Activated CD8-positive, alpha-beta T cell treated with anti-CD3 and anti-CD28 coated beads, Interleukin-2, amount 10 ng/mL, durations not matched to agents 7 days and 5 days (primary cell): ENCODE measurements at regions of chr14 and their contacts with region 1.

Region 1: DNA sequence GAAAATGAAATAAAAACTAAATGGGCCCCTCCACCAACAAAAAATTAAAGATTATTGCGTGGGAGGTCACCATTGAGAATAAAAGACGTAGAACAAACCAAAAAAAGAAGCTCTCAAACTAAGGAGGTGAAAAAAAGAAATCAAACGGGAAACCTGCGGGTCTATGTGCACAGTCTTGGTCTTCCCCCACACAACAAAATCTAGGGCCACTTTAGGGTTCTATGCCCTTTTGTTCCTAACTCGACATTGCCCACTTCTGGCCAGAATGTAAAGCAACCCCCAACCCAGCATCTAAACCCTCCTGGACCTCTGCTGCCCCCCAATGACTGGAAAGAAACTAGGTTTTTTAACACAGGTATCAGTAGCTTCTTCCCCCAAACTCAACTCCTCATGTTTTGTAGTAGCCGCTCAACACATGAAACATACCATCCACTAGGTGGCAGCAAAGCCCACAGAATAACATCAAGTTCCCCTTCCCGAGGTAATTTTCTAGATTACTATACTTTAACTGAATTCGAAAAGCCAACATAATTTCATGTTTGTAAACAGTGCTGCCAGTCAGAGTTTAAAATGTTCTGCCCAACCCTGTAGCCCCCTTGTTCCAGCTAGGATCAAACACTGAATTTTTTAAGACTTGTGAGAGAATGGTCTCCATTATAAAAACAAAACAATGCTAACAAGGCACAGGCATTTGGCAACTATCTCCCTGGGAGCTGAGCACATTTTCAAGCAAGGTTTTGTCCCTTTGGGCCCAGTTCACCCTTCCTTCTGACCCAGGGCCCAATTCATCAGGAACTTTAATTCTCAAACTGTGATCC is 18.7 kb downstream of the DAD1 start:
- DNase-seq: peak; percentile 94
- ATAC-seq: peak; percentile 87
- H3K4me3 Mint-ChIP-seq: peak overlapping the region; percentile 80
- H3K27ac Mint-ChIP-seq: peak overlapping the region; percentile 92
- H3K4me1 Mint-ChIP-seq: peaks cover 62% of the 10 kb centered on the region
- H3K27me3 Mint-ChIP-seq: no peaks in the 10 kb centered on the region

Region 2: GRCh38 chr14:21917699-21918436 is 652.5 kb before region 1 on chr14:
- CTCF ChIA-PET with region 1: interaction called, 70 read pairs
- POLR2A ChIA-PET with region 1: interaction called, 15 read pairs
- DNase-seq: peak; percentile 84
- ATAC-seq: peak; percentile 65
- H3K4me3 Mint-ChIP-seq: peak overlapping the region; percentile 78
- H3K27ac Mint-ChIP-seq: peak overlapping the region; percentile 81
- H3K4me1 Mint-ChIP-seq: peaks cover 73% of the 10 kb centered on the region
- H3K27me3 Mint-ChIP-seq: no peaks in the 10 kb centered on the region

Region 3: DNA sequence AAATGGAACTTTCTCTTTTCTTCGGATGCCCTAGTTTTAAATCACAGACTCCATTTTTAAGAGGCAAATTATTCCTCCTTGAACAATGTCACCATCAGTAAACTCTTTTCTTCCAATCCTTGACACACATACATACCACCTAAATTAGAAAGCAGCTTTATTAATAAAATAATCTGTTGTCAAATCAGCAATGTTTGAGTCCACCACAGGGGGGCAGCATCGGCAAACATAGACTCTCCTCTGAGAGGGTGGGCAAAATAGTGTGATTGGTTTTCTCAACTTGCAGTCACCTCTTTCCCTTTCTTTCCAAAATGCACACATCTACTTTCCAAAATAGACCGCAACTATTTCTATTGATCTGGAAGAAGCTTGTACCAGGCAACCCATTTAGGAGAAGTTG is 458.3 kb before region 1 on chr14:
- CTCF ChIA-PET with region 1: interaction called, 22 read pairs
- POLR2A ChIA-PET with region 1: interaction called, 3 read pairs
- DNase-seq: peak; percentile 61
- ATAC-seq: no peak
- H3K4me3 Mint-ChIP-seq: peak overlapping the region; percentile 68
- H3K27ac Mint-ChIP-seq: peak overlapping the region; percentile 81
- H3K4me1 Mint-ChIP-seq: peaks cover 33% of the 10 kb centered on the region
- H3K27me3 Mint-ChIP-seq: no peaks in the 10 kb centered on the region

Region 4: GRCh38 chr14:22505697-22506377 is 64.5 kb before region 1 on chr14:
- CTCF ChIA-PET with region 1: interaction called, 29 read pairs
- POLR2A ChIA-PET with region 1: interaction called, 9 read pairs
- DNase-seq: no peak
- ATAC-seq: peak; percentile 31
- H3K4me3 Mint-ChIP-seq: peak overlapping the region; percentile 84
- H3K27ac Mint-ChIP-seq: peak overlapping the region; percentile 97
- H3K4me1 Mint-ChIP-seq: peaks cover 59% of the 10 kb centered on the region
- H3K27me3 Mint-ChIP-seq: no peaks in the 10 kb centered on the region

Region 5: GRCh38 chr14:22556990-22557623 is 13.2 kb before region 1 on chr14:
- CTCF ChIA-PET with region 1: interaction called, 523 read pairs
- POLR2A ChIA-PET with region 1: interaction called, 440 read pairs
- DNase-seq: peak; percentile 94
- ATAC-seq: peak; percentile 24
- H3K4me3 Mint-ChIP-seq: peak overlapping the region; percentile 76
- H3K27ac Mint-ChIP-seq: peak overlapping the region; percentile 97
- H3K4me1 Mint-ChIP-seq: peaks cover 90% of the 10 kb centered on the region
- H3K27me3 Mint-ChIP-seq: no peaks in the 10 kb centered on the region

Region 6: DNA sequence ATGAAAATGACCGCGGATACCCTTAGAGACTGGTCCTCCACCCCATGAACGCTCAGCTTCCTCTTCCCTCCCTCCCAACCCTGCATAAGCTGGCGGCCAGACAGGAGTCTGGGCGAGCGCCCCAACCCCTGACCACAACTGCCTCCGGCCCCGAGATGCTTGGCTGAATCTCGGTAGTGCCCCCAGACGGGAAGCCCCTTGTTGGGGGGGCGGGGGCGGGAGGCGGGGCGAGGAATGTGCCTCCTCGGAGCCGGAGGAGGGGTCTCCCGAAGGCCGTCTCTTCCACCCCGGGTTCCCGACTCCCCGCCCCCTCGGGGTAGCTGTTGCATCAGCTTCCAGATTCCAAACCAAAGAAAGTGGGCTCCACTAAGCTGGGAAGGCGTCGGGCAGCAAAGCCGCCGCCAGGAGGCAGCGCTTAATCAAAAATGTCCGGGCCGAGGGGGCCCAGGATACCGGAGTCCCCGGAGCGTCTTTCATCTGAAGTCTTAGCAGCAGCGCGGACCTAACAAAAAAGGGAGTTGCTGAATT is 252.3 kb after region 1 on chr14:
- CTCF ChIA-PET with region 1: interaction called, 30 read pairs
- POLR2A ChIA-PET with region 1: interaction called, 4 read pairs
- DNase-seq: peak; percentile 79
- ATAC-seq: peak; percentile 89
- H3K4me3 Mint-ChIP-seq: peak overlapping the region; percentile 39
- H3K27ac Mint-ChIP-seq: no peak overlapping the region
- H3K4me1 Mint-ChIP-seq: peaks cover 32% of the 10 kb centered on the region
- H3K27me3 Mint-ChIP-seq: peaks cover 24% of the 10 kb centered on the region

Region 7: DNA sequence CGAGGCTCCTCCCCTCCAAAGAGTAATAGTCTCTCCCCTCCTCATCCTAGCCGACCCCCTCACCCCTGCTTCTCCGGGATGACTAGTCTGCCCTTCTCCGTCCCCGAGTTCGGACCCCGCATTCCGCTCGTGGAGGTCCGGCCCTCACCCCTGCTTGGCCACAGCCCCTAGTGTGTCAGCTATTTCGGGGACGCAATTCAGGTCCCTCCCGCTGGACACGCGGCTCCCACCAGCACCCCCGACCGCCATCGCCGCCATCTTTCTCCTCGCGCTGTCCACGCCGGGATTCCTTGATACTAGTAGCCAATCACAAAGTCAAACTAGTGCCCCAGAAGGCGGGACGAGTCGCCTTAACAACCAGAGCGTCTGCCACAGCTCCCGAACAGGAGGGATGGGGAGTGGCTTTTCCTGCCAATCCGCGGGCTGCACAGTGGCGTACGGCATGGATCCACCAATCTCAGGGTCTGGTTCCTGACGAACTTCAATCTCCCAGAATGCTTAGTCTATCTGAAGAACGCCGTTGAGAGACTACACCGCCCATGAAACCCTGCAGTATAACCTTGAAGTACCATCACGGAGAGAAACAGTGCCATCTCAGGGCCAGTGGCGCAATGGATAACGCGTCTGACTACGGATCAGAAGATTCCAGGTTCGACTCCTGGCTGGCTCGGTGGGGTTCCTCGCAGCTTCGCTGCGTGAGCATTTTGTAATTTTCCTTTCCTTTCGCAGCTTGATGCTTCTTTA is 358.9 kb after region 1 on chr14 and contains the start of gene PRMT5:
- CTCF ChIA-PET with region 1: interaction called, 10 read pairs
- POLR2A ChIA-PET with region 1: interaction called, 3 read pairs
- DNase-seq: peak; percentile 98
- ATAC-seq: peak; percentile 98
- H3K4me3 Mint-ChIP-seq: no peak within 1 kb of the TSS
- H3K27ac Mint-ChIP-seq: no peak within 1 kb of the TSS
- H3K4me1 Mint-ChIP-seq: peaks cover 27% of the 10 kb centered on the region
- H3K27me3 Mint-ChIP-seq: no peaks in the 10 kb centered on the region
- total RNA-seq, gene PRMT5: 55.5 to 64.9 TPM